CD8-positive, alpha-beta memory T cell (primary cell): ENCODE measurements at regions of chr4 and their contacts with region 1.

Region 1: DNA sequence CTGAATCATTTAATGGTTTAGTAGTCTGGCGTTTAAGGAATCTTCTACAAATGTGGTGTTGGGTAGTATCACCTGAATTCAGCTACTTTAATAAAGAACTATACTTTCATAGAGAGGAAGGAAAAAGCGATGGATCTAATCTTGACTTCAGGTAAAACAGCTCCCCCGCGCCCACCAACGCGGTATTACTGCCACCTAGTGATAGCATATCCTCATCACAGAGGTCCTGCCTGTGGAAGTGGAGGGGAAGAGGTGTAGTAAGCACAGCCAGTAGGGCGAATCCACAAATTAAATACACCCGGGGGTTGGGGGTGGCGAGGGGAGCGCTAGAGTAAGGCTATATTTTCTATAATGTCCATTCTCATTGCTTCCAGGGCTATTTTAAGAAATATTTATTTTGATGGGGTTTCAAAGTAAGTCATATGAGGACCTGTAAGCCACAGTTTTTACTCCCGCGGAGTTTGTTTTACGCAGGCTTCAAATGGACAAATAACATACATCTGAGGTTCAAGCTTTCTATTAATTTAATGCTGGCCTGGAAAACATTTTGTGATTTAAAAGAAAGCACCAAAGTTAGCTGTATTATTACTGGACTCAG is 8.3 kb upstream of the DAPP1 start:
- DNase-seq: peak; percentile 46 to 78 (median 54)
- H3K4me3 ChIP-seq: no peak overlapping the region
- H3K4me3 Mint-ChIP-seq: no peak overlapping the region
- H3K27ac ChIP-seq: no peak overlapping the region
- H3K27ac Mint-ChIP-seq: no peak overlapping the region
- H3K4me1 ChIP-seq: no peaks in the 10 kb centered on the region
- H3K4me1 Mint-ChIP-seq: peaks cover 0 to 5% (median 3%) of the 10 kb centered on the region in 3 donors
- H3K27me3 ChIP-seq: no peaks in the 10 kb centered on the region
- H3K27me3 Mint-ChIP-seq: peaks cover 11 to 37% of the 10 kb centered on the region in 2 donors

Region 2: DNA sequence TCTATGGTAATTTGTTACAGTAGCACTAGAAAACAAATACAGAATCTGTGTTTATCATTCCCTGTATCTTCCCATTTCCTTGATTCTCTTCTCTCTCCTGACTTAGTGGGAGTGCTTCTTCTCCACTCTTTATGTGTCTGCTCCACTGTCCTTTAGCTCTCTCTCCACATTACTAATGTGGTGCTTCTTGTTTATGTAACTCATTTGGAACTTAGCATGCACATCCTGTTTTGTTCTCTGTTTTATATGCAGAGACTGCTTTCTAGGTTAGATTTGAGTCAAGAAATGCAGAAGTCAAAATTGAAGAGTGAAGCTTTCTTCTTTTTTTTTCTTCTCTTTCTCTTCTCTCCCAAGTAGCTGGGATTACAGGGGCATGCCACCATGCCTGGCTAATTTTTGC is 543.4 kb before region 1 on chr4:
- CTCF ChIA-PET with region 1: no interaction called
- POLR2A ChIA-PET with region 1: no interaction called
- DNase-seq: no peak
- H3K4me3 ChIP-seq: no peak overlapping the region
- H3K4me3 Mint-ChIP-seq: no peak overlapping the region
- H3K27ac ChIP-seq: no peak overlapping the region
- H3K27ac Mint-ChIP-seq: no peak overlapping the region
- H3K4me1 ChIP-seq: no peaks in the 10 kb centered on the region
- H3K4me1 Mint-ChIP-seq: no peaks in the 10 kb centered on the region
- H3K27me3 ChIP-seq: no peaks in the 10 kb centered on the region
- H3K27me3 Mint-ChIP-seq: peaks cover 1 to 14% of the 10 kb centered on the region in 2 donors

Region 3: DNA sequence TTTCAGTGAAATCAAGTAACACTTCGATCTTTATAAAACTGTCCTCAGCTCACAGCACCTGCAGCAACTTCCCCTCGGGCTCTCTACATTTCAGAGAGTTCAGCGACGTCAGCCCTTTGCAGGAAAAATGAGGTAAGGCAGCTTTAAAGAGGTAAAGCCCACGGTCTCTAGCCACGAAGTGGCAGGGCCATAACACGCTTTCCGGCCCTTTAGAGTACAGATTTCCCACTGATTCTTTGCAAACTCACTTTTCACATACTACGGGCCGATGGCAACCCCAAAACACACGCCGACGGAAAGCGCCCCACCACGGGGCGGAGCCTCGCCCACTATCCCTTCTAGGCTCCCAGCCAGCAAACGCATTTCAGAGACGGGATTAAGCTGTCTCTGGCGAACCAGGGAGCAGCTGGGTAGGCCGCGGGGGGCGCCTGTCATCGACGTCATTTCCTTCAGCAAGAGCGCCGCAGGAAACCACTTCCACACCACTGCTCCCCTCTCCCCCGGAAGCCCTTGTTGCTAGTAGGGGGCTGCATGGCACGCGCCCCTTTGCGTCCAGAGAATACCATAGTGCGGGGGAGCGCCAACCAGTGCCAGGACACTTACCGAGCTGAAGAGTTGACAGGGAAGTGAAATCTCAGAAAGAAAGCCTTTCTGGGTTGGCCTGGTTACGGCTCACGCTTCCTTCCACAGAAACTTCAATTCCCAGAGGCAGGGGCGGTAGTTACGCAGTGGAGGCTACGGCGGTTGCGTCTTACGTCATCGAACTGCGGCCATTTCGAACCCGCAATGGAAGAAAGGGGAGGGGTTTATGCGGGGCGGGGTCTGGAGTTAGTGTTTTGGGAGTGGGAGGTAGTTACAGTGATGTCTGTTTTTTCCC is 244.8 kb before region 1 on chr4 and contains the start of gene TRMT10A:
- CTCF ChIA-PET with region 1: interaction called, 22 read pairs
- POLR2A ChIA-PET with region 1: interaction called, 3 read pairs
- DNase-seq: peak; percentile 92 to 98 (median 97)
- H3K4me3 ChIP-seq: peak within 1 kb of the TSS; percentile 82
- H3K4me3 Mint-ChIP-seq: peak within 1 kb of the TSS; percentile 90 to 99 (median 96)
- H3K27ac ChIP-seq: peak within 1 kb of the TSS; percentile 97
- H3K27ac Mint-ChIP-seq: peak within 1 kb of the TSS; percentile 98 to 100 (median 100)
- H3K4me1 ChIP-seq: peaks cover 9% of the 10 kb centered on the region
- H3K4me1 Mint-ChIP-seq: peaks cover 22 to 26% (median 24%) of the 10 kb centered on the region in 3 donors
- H3K27me3 ChIP-seq: peaks cover 4% of the 10 kb centered on the region
- H3K27me3 Mint-ChIP-seq: peaks cover 13 to 28% of the 10 kb centered on the region in 2 donors
- total RNA-seq, gene TRMT10A: 8.1 to 10.1 TPM

Region 4: GRCh38 chr4:99790796-99791617 is 17.4 kb before region 1 on chr4:
- CTCF ChIA-PET with region 1: no interaction called
- POLR2A ChIA-PET with region 1: no interaction called
- DNase-seq: no peak
- H3K4me3 ChIP-seq: no peak overlapping the region
- H3K4me3 Mint-ChIP-seq: no peak overlapping the region
- H3K27ac ChIP-seq: no peak overlapping the region
- H3K27ac Mint-ChIP-seq: no peak overlapping the region
- H3K4me1 ChIP-seq: no peaks in the 10 kb centered on the region
- H3K4me1 Mint-ChIP-seq: no peaks in the 10 kb centered on the region
- H3K27me3 ChIP-seq: no peaks in the 10 kb centered on the region
- H3K27me3 Mint-ChIP-seq: peaks cover 31 to 57% of the 10 kb centered on the region in 2 donors

Region 5: DNA sequence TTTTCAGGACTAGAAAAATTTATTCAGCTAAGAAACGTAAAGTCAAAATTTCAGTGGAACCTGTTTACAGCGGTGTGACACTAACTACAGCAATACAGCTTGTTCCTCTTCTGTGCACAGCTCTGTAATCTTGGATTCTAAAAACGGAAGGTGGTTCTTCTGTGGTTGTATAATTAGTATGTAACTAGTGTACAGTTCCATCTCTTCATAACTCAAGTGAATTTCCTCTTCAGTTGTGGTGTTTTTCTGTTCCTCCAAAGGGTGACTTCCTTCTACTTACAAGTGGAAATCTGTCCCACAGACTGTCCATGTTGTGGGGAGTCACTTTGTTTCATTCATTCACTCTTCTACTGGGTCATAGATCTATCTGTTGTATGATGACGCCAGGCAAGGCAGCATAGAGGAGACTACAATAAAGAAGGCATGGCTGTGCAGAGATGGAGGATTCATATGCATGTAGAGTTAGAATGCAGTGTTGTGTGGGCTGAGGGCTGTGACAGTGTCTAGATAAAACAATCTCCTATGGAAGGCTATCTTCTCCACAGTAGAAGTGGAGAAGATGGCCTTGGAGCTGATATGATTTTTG is 13.7 kb after region 1 on chr4:
- CTCF ChIA-PET with region 1: interaction called, 15 read pairs
- POLR2A ChIA-PET with region 1: interaction called, 8 read pairs
- DNase-seq: no peak
- H3K4me3 ChIP-seq: no peak overlapping the region
- H3K4me3 Mint-ChIP-seq: peak overlapping the region in 1 of 7 donors; percentile 6
- H3K27ac ChIP-seq: no peak overlapping the region
- H3K27ac Mint-ChIP-seq: peak overlapping the region in 2 of 8 donors; percentile 5 to 47
- H3K4me1 ChIP-seq: peaks cover 28% of the 10 kb centered on the region
- H3K4me1 Mint-ChIP-seq: peaks cover 39 to 77% (median 66%) of the 10 kb centered on the region in 3 donors
- H3K27me3 ChIP-seq: no peaks in the 10 kb centered on the region
- H3K27me3 Mint-ChIP-seq: no peaks in the 10 kb centered on the region

Region 6: DNA sequence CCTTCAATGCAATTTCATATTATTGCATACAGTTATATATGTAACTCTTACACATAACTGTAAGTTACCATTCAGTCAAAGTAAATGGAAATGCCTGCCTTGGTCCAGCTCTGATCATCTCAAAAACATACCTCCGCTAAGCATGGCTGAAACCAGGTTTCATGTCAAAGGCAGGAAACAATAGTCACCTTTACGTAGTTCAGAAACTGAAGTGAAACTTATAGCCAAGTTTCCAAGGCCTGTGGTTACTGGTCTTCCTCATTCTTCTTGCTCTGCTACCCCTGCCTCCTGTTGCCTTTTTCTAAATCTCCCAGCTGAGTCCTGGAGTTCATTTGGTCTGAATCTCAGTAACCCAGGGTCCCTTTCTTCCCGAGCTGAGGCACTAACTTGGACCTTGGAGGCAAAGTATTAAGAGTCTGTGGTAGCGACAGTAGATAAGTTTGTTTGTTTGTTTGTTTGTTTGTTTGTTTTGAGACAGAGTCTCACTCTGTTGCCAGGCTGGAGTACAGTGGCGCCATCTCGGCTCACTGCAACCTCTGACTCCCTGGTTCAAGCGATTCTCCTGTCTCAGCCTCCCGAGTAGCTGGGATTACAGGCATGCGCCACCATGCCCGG is 39.1 kb after region 1 on chr4:
- CTCF ChIA-PET with region 1: interaction called, 11 read pairs
- POLR2A ChIA-PET with region 1: no interaction called
- DNase-seq: no peak
- H3K4me3 ChIP-seq: no peak overlapping the region
- H3K4me3 Mint-ChIP-seq: peak overlapping the region in 3 of 7 donors; percentile 20 to 64 (median 27)
- H3K27ac ChIP-seq: no peak overlapping the region
- H3K27ac Mint-ChIP-seq: peak overlapping the region; percentile 0 to 89 (median 54)
- H3K4me1 ChIP-seq: peaks cover 26% of the 10 kb centered on the region
- H3K4me1 Mint-ChIP-seq: peaks cover 21 to 64% (median 43%) of the 10 kb centered on the region in 3 donors
- H3K27me3 ChIP-seq: no peaks in the 10 kb centered on the region
- H3K27me3 Mint-ChIP-seq: no peaks in the 10 kb centered on the region

Region 7: GRCh38 chr4:99949034-99949998 is 141.0 kb after region 1 on chr4:
- CTCF ChIA-PET with region 1: interaction called, 35 read pairs
- POLR2A ChIA-PET with region 1: interaction called, 3 read pairs
- DNase-seq: peak; percentile 81 to 89 (median 85)
- H3K4me3 ChIP-seq: peak overlapping the region; percentile 98
- H3K4me3 Mint-ChIP-seq: no peak overlapping the region
- H3K27ac ChIP-seq: peak overlapping the region; percentile 88
- H3K27ac Mint-ChIP-seq: no peak overlapping the region
- H3K4me1 ChIP-seq: peaks cover 37% of the 10 kb centered on the region
- H3K4me1 Mint-ChIP-seq: peaks cover 31 to 37% (median 35%) of the 10 kb centered on the region in 3 donors
- H3K27me3 ChIP-seq: no peaks in the 10 kb centered on the region
- H3K27me3 Mint-ChIP-seq: no peaks in the 10 kb centered on the region